RWPE1 (cell line): ENCODE measurements at regions of chr17 and their contacts with region 1.

Region 1: DNA sequence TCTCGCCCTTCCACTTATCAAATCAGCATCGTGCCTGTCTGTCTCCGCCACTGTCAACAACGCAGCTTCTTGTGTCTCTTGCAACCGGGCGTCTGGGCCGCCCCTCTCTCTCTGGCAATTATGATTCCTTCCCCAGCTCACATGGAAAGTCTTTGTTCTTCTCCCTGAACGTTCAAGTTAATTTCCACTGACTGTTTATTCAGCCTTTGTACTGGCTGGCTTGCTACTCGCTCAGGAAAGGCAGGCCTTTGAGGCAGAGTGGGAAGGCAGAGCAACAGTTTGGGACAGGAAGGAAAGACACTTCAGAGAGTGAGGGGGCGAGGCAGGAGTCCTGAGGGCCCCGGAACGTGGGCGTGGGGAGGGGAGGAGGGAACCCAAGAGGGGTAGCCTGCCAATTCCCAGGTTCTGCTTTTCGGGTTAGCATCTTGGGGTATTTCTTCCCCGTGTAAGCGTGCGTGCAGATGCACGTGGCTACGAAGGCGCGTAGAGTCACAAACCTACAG is 50.8 kb downstream of the AKAP1 start:
- DNase-seq: no peak
- H3K27ac ChIP-seq: no peak overlapping the region
- CTCF ChIP-seq: no peak

Region 2: DNA sequence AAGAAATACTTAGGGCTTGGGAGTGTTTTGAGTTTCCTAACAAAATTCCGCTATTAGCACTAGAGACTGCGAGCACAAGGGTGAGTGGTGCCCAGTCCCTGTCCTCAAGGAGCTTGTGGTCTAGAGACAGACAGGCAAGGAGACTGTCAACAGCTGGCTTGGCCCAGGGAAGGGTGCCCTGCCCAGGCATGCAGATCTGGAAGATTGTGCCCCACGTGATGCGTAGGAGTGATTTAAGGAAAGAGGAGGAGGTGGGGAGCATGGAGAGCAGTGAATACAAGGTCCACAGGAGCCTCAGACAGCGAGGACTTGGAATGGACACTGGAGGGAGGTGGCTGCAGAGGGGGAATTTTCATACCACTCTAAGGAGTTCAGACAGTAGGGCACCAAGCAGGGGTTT is 132.9 kb before region 1 on chr17:
- CTCF ChIA-PET with region 1: interaction called, 10 read pairs
- POLR2A ChIA-PET with region 1: no interaction called
- DNase-seq: no peak
- H3K27ac ChIP-seq: no peak overlapping the region
- CTCF ChIP-seq: no peak